Activated CD4-positive, alpha-beta memory T cell treated with anti-CD3 and anti-CD28 coated beads, Interleukin-2, amount 10 ng/mL, durations not matched to agents 7 days and 5 days (primary cell): ENCODE measurements at regions of chr13 and their contacts with region 1.

Region 1: DNA sequence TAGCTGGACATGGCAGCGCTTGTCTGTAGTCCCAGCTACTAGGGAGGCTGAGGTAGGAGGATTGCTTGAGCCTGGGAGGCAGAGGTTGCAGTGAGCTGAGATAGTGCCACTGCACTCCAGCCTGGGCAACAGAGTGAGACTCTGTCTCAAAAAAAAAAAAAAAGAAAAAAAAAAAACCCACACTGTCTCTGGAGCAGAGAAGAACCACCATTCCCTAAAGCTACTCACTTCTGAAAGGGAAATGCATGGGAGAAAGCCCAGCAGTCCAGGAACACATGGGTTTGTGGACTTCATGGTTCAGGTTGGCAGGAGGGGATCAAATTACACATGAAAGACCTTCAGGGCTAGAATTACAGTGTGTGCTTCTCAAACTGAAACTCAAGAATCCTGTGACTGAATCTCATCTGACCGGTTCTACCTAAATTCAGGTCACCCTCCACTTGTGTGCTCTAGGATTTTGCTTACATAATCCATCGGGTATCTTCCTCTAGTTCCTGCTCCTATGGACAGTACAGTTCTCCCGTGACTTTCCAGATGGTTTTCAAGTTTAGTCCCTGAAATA is 30.2 kb upstream of the CPB2 start:
- DNase-seq: no peak
- H3K4me3 Mint-ChIP-seq: no peak overlapping the region
- H3K27ac Mint-ChIP-seq: peak overlapping the region; percentile 30
- H3K4me1 Mint-ChIP-seq: peaks cover 37% of the 10 kb centered on the region
- H3K27me3 Mint-ChIP-seq: no peaks in the 10 kb centered on the region

Region 2: GRCh38 chr13:46149272-46150133 is 14.5 kb after region 1 on chr13:
- CTCF ChIA-PET with region 1: no interaction called
- POLR2A ChIA-PET with region 1: interaction called, 68 read pairs
- DNase-seq: no peak
- H3K4me3 Mint-ChIP-seq: no peak overlapping the region
- H3K27ac Mint-ChIP-seq: peak overlapping the region; percentile 60
- H3K4me1 Mint-ChIP-seq: peaks cover 37% of the 10 kb centered on the region
- H3K27me3 Mint-ChIP-seq: no peaks in the 10 kb centered on the region

Region 3: DNA sequence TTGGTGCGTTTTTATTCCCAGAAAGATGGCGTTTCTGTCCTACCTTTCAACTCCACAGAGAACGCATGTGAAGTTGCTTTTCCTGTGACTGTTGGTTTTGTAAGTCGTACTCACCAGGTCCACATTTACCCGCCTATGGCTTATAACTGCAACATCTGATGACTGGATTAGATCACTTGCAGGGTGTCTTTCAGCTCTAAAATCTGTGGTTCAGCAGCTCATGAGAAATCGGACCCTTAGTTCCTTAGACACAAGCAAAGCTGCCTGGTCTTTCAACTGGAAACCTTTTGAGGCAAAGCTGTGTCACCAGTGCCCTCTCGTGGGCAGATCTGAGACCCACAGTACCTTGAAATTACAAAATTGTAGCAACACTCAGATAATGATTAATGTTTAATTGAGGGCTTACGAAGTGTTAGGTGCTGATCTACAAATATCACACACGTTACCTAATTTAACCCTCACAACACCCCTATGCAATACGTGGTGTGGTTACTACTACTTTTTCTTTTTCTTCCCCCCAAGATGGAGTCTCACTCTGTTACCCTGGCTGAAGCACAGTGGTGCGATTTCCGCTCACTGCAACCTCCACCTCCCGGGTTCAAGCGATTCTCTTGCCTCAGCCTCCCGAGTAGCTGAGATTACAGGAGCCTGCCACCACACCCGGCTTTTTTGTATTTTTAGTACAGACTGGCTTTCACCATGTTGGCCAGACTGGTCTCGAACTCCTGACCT is 186.6 kb after region 1 on chr13:
- CTCF ChIA-PET with region 1: no interaction called
- POLR2A ChIA-PET with region 1: no interaction called
- DNase-seq: peak; percentile 76
- H3K4me3 Mint-ChIP-seq: peak overlapping the region; percentile 46
- H3K27ac Mint-ChIP-seq: peak overlapping the region; percentile 34
- H3K4me1 Mint-ChIP-seq: peaks cover 15% of the 10 kb centered on the region
- H3K27me3 Mint-ChIP-seq: no peaks in the 10 kb centered on the region